Sigmoid colon (tissue), 7 donors: ENCODE measurements at regions of chr1 and their contacts with region 1.

Region 1: GRCh38 chr1:85200870-85201339 is at the start of gene SYDE2:
- DNase-seq: peak; percentile 93
- H3K4me3 ChIP-seq: peak within 1 kb of the TSS; percentile 73 to 98 (median 88)
- H3K27ac ChIP-seq: peak within 1 kb of the TSS; percentile 93 to 99 (median 99)
- H3K4me1 ChIP-seq: peaks cover 0 to 28% (median 12%) of the 10 kb centered on the region in 4 donors
- H3K27me3 ChIP-seq: no peaks in the 10 kb centered on the region
- CTCF ChIP-seq: no peak
- EP300 ChIP-seq: no peak
- POLR2A ChIP-seq: peak; percentile 64 to 90
- total RNA-seq, gene SYDE2: 39.3 to 87.3 (median 54.6) TPM

Region 2: DNA sequence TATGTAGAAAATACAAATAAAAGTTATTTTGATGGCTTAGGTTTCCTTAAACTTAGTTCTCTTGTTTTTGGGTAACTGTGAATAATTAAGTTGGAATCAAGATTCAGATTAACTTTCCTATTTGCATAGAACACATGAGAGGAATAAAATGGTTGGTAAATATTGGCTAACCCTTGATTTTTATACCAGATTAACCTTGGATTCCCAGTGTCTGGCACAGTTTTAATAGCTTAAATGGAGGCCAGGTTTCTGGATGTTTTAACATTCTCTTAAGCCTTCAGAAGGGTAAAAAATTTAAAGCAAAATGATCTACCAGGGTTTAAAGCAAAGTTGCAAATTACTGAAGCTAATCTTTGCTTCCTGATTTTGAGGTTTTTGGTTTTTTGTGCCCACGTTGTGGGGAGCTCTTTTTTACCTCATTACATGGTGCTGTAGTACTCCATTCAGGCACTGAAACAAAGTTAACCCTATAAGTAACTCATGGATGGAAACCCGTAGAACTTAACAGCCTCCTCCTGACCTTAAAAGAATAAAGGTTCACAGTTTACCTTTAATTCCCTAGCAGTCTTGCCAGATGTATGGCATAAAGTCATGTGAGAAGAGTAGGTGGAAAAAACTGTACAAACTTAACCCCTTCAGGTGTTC is 703.2 kb before region 1 on chr1:
- intact Hi-C with region 1: loop called (anchors 5 kb)
- DNase-seq: no peak
- H3K4me3 ChIP-seq: no peak overlapping the region
- H3K27ac ChIP-seq: no peak overlapping the region
- H3K4me1 ChIP-seq: peaks cover 0 to 43% (median 26%) of the 10 kb centered on the region in 4 donors
- H3K27me3 ChIP-seq: no peaks in the 10 kb centered on the region
- CTCF ChIP-seq: no peak
- EP300 ChIP-seq: no peak
- POLR2A ChIP-seq: no peak

Region 3: GRCh38 chr1:85220756-85221201 is 19.9 kb after region 1 on chr1:
- intact Hi-C with region 1: no loop called
- DNase-seq: no peak
- H3K4me3 ChIP-seq: no peak overlapping the region
- H3K27ac ChIP-seq: peak overlapping the region; percentile 73 to 85 (median 78)
- H3K4me1 ChIP-seq: peaks cover 0 to 71% (median 65%) of the 10 kb centered on the region in 4 donors
- H3K27me3 ChIP-seq: no peaks in the 10 kb centered on the region
- CTCF ChIP-seq: no peak
- EP300 ChIP-seq: peak in 1 of 4 donors; percentile 86
- POLR2A ChIP-seq: no peak

Region 4: GRCh38 chr1:85240174-85240601 is 39.3 kb after region 1 on chr1:
- intact Hi-C with region 1: loop called (anchors 5 kb)
- DNase-seq: no peak
- H3K4me3 ChIP-seq: no peak overlapping the region
- H3K27ac ChIP-seq: peak overlapping the region; percentile 41 to 72 (median 62)
- H3K4me1 ChIP-seq: peaks cover 0 to 43% (median 38%) of the 10 kb centered on the region in 4 donors
- H3K27me3 ChIP-seq: no peaks in the 10 kb centered on the region
- CTCF ChIP-seq: peak in 1 of 4 experiments; percentile 10
- EP300 ChIP-seq: no peak
- POLR2A ChIP-seq: no peak

Region 5: GRCh38 chr1:85259118-85259911 is 58.4 kb after region 1 on chr1 and contains the start of gene C1orf52:
- intact Hi-C with region 1: loop called (anchors 5 kb)
- DNase-seq: peak; percentile 97
- H3K4me3 ChIP-seq: peak within 1 kb of the TSS; percentile 69 to 94 (median 88)
- H3K27ac ChIP-seq: peak within 1 kb of the TSS; percentile 76 to 89 (median 84)
- H3K4me1 ChIP-seq: peaks cover 0 to 49% (median 35%) of the 10 kb centered on the region in 4 donors
- H3K27me3 ChIP-seq: no peaks in the 10 kb centered on the region
- CTCF ChIP-seq: peak; percentile 92 to 100 (median 97)
- EP300 ChIP-seq: no peak
- POLR2A ChIP-seq: peak; percentile 57 to 67
- total RNA-seq, gene C1orf52: 8.9 to 31.1 (median 19.4) TPM